CD8-positive, alpha-beta T cell (primary cell): ENCODE measurements at regions of chr15 and their contacts with region 1.

Region 1: DNA sequence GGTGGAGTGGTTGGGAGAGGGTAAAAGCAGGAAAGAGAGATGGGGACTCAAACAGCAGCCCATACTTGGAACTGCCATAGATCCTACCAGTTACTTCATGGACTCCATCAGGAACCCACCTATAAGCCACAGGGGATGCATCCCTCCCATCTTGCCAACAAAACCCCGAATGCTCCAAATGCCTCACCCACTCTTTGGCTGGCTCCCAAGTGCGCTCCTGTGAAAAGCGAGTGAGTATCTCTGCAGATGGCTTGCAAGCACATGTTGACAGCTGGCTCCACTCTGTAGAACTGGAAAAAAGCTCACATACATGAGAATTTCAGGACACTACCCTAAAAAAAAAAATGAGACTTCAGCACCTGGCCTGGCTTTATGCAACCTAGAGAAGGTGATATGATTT is 151.0 kb downstream of the UBE3A start:
- DNase-seq: no peak
- ATAC-seq: no peak
- H3K4me3 ChIP-seq: no peak overlapping the region
- H3K4me3 Mint-ChIP-seq: no peak overlapping the region
- H3K27ac ChIP-seq: no peak overlapping the region
- H3K27ac Mint-ChIP-seq: no peak overlapping the region
- H3K4me1 ChIP-seq: no peaks in the 10 kb centered on the region
- H3K4me1 Mint-ChIP-seq: no peaks in the 10 kb centered on the region
- H3K27me3 ChIP-seq: no peaks in the 10 kb centered on the region
- H3K27me3 Mint-ChIP-seq: peaks cover 2% of the 10 kb centered on the region
- CTCF ChIP-seq: no peak

Region 2: GRCh38 chr15:25372298-25372697 is 84.5 kb after region 1 on chr15:
- CTCF ChIA-PET with region 1: no interaction called
- POLR2A ChIA-PET with region 1: no interaction called
- intact Hi-C with region 1: no loop called
- DNase-seq: no peak
- ATAC-seq: no peak
- H3K4me3 ChIP-seq: no peak overlapping the region
- H3K4me3 Mint-ChIP-seq: no peak overlapping the region
- H3K27ac ChIP-seq: no peak overlapping the region
- H3K27ac Mint-ChIP-seq: no peak overlapping the region
- H3K4me1 ChIP-seq: no peaks in the 10 kb centered on the region
- H3K4me1 Mint-ChIP-seq: peaks cover 28% of the 10 kb centered on the region
- H3K27me3 ChIP-seq: no peaks in the 10 kb centered on the region
- H3K27me3 Mint-ChIP-seq: no peaks in the 10 kb centered on the region
- CTCF ChIP-seq: no peak

Region 3: GRCh38 chr15:25635191-25635590 is 347.4 kb after region 1 on chr15:
- CTCF ChIA-PET with region 1: no interaction called
- POLR2A ChIA-PET with region 1: no interaction called
- intact Hi-C with region 1: loop called in 1 of 2 experiments (anchors 5 kb)
- DNase-seq: no peak
- ATAC-seq: no peak
- H3K4me3 ChIP-seq: no peak overlapping the region
- H3K4me3 Mint-ChIP-seq: no peak overlapping the region
- H3K27ac ChIP-seq: no peak overlapping the region
- H3K27ac Mint-ChIP-seq: no peak overlapping the region
- H3K4me1 ChIP-seq: no peaks in the 10 kb centered on the region
- H3K4me1 Mint-ChIP-seq: no peaks in the 10 kb centered on the region
- H3K27me3 ChIP-seq: no peaks in the 10 kb centered on the region
- H3K27me3 Mint-ChIP-seq: peaks cover 10% of the 10 kb centered on the region
- CTCF ChIP-seq: no peak

Region 4: DNA sequence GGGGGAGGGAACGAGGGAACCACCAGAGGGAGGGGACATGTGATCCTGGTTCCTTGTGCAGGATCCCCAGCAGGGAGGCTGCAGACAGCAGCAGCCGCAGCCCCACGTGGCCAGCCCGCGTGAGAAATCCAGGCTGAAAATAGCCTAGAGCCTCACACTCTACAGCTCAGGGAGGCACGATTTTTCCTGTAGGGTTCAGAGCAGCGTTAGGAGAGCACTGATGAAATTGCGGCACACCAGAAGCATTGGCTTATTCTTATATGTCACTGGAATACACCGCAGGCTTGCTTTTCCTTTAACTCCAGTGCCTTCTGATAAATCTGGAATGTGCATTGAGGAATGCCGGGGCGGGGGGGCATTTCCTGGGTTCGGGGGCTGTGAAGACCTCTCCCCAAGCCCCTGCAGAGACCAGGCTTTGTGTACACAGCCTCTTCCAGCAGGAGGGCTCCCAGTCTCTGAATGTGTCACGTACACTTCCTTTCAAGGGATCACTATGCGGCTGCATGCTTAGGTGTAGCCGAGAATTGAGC is 382.3 kb after region 1 on chr15:
- CTCF ChIA-PET with region 1: no interaction called
- POLR2A ChIA-PET with region 1: no interaction called
- intact Hi-C with region 1: no loop called
- DNase-seq: no peak
- ATAC-seq: no peak
- H3K4me3 ChIP-seq: no peak overlapping the region
- H3K4me3 Mint-ChIP-seq: no peak overlapping the region
- H3K27ac ChIP-seq: no peak overlapping the region
- H3K27ac Mint-ChIP-seq: no peak overlapping the region
- H3K4me1 ChIP-seq: peaks cover 8% of the 10 kb centered on the region
- H3K4me1 Mint-ChIP-seq: no peaks in the 10 kb centered on the region
- H3K27me3 ChIP-seq: peaks cover 0 to 7% of the 10 kb centered on the region in 2 experiments
- H3K27me3 Mint-ChIP-seq: peaks cover 28% of the 10 kb centered on the region
- CTCF ChIP-seq: no peak